ENCODE measurements at regions of chr11 and their contacts with region 1.

Region 1: DNA sequence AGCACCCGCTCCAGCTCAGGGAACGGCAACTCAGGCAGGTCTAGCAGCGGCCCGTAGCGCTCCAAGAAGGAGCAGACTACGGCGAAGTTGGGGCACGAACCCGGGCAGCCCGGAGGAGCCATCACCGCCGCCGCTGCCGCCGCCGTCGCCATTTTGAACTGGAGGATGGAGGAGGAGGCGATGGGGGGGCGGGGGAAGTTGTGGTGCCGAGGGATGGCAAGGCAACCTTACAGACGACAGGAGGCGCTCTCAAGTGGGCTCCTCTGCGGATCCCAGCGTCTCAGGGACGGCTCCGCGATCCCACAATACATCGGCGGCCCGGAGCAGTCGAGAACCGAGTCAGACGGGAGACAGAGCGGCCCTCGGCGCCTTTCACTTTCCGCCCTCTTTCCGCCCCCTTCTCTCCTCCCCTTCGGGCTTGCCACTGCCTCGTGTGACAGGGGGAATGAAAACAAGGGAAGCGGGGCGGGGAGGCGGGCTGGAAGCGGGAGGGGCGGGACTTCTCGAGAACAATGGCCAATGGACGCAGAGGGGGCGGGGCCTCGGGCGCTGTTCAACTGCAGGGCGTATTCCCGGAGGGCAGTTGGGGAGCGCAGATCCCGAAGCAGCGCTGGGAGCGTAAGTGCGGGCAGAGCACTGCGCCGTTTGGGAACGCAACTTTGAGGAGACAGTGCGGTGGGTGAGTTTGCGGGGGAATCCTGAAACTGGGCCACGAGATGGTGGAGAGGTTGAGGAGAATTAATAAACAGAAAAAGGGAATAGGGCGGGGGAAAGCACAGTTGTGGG is at the starts of genes AAMDC and RSF1:
- DNase-seq: peak; percentile 99
- H3K4me3 ChIP-seq: peak within 1 kb of the TSS; percentile 99
- H3K27ac ChIP-seq: peak within 1 kb of the TSS; percentile 86 to 94
- H3K4me1 ChIP-seq: peaks cover 6% of the 10 kb centered on the region
- H3K27me3 ChIP-seq: no peaks in the 10 kb centered on the region
- CTCF ChIP-seq: peak; percentile 58 to 76 (median 70)
- EP300 ChIP-seq: no peak
- POLR2A ChIP-seq: peak; percentile 71
- total RNA-seq, gene AAMDC: 21.8 to 50.7 (median 38.9) TPM
- total RNA-seq, gene RSF1: 63.3 to 89.2 (median 76.6) TPM

Region 2: GRCh38 chr11:76140912-76141574 is 1679.7 kb before region 1 on chr11:
- intact Hi-C with region 1: no loop called
- DNase-seq: no peak
- H3K4me3 ChIP-seq: no peak overlapping the region
- H3K27ac ChIP-seq: no peak overlapping the region
- H3K4me1 ChIP-seq: no peaks in the 10 kb centered on the region
- H3K27me3 ChIP-seq: no peaks in the 10 kb centered on the region
- CTCF ChIP-seq: no peak
- EP300 ChIP-seq: no peak
- POLR2A ChIP-seq: no peak

Region 3: GRCh38 chr11:77752518-77752917 is 68.2 kb before region 1 on chr11:
- intact Hi-C with region 1: no loop called
- DNase-seq: peak in 1 of 5 donors; percentile 69
- H3K4me3 ChIP-seq: no peak overlapping the region
- H3K27ac ChIP-seq: no peak overlapping the region
- H3K4me1 ChIP-seq: peaks cover 10% of the 10 kb centered on the region
- H3K27me3 ChIP-seq: no peaks in the 10 kb centered on the region
- CTCF ChIP-seq: no peak
- EP300 ChIP-seq: no peak
- POLR2A ChIP-seq: no peak

Region 4: DNA sequence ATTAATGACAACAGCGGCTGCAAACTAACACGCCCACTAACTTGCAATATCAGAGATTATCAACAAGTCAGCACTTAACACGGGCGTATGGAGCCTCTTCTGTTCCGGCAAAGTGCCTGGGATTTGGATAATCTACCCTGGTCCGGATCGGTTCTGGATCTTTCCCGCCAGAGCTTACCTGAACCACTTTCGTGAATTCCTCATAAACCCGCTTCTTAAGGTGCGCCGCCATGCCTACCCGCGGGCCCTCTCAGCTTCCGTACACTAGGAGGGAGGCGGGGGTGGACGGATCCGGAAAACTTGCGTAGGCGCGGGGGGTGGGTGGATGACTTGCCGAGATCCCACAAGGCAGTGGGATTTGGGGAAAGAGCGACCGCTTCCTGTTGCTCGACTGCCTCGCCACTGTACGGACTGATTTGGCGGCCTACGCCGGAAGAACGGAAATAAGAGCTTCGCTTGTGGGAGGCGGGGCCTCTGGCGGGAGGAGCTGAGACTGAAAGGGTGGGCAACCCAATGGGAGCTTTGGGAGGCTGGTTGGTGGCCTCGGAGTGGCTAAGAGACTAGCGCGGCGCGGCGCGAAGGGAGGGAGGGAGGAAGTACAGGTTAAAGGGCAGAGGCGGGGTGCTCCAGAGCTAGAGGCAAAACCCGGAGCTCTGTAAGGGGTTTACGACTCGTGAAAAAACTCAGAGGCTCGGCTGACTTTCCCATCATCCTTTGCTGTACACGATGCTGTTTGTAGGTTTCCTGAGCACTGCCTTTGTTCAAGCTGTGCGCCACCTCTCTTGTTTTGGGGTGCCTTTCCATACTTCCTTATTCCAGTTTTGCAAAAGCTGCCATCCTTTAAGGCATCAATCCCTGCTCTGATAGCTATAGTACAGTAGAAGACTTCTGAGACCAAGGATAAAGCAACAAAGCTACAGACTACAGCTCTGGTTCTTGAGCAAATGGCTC is 173.9 kb after region 1 on chr11 and contains the start of gene INTS4:
- intact Hi-C with region 1: loop called in 1 of 4 experiments (anchors 10 kb)
- DNase-seq: peak; percentile 98 to 99 (median 99)
- H3K4me3 ChIP-seq: peak within 1 kb of the TSS; percentile 57
- H3K27ac ChIP-seq: peak within 1 kb of the TSS; percentile 44 to 85
- H3K4me1 ChIP-seq: peaks cover 5% of the 10 kb centered on the region
- H3K27me3 ChIP-seq: no peaks in the 10 kb centered on the region
- CTCF ChIP-seq: no peak
- EP300 ChIP-seq: peak; percentile 56
- POLR2A ChIP-seq: peak; percentile 45
- total RNA-seq, gene INTS4: 26.2 to 37.7 (median 30.5) TPM

Measured in ovary (tissue), 10 donors.